ENCODE measurements at regions of chr9 and their contacts with region 1.

Region 1: DNA sequence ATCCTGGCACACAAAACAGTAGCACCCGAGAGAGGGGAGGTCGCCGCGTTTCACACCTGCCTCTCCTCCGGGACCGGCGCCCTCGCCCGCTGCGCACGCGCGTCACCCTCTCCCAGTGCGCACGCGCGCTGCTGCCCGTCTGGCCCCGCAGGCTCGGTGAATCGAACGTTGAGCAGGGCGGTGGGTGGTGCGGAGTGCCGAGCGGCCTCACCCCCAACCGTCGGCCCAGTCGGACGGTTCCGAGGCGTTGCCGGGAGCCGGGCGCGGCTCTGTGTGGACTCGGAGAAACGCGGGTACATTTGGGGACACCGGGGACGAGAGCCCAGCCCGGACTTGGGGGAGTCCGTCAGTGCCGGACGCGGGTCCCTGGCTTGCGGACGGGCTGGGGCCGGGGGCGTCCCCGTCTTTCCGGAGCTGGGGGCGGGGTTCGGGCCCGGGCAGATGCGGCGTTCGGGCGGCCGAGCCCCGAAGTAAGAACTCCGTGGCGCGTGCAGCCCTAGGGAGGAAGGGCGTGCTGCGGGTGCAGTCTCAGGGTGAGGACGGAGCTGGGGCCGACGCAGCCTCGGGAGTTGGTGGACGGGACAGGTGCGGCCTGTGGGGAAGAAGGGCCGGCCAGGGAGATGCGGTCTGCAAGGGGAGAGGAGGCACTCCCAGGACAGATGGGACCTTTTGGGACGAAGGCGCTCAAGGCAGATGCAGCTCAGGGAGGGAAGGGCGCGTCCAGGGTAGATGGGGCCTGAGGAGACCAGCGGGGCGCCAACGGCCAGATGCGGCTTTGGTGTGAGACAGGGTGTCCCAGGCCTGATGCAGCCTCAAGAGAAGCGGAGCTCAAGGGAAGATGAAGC is at the start of gene POMT1:
- DNase-seq: peak; percentile 87
- H3K4me3 Mint-ChIP-seq: peak within 1 kb of the TSS; percentile 97
- H3K27ac Mint-ChIP-seq: peak within 1 kb of the TSS; percentile 91
- H3K4me1 Mint-ChIP-seq: peaks cover 35% of the 10 kb centered on the region
- H3K27me3 Mint-ChIP-seq: no peaks in the 10 kb centered on the region
- total RNA-seq, gene POMT1: 44.5 and 46.9 TPM in 2 replicates

Region 2: DNA sequence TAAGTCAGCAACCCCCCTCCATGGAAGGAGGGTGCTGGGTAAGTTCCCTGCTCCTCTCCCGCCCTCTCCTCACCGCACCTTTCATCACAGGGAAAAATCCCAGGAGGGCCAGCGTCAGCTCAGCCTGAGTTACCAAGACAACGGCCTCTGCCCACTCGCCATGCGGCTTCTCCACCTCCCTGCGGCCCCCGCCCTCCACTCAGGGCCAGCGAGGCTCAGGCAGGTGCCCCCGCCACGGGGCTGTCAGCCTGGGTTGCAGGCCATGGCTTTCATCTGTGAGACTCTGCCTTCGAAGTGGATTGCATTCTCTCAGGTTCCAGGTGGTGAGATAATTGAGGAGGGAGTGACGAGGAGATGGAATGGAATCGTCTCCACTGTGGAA is 521.3 kb before region 1 on chr9:
- intact Hi-C with region 1: no loop called
- DNase-seq: no peak
- H3K4me3 Mint-ChIP-seq: no peak overlapping the region
- H3K27ac Mint-ChIP-seq: no peak overlapping the region
- H3K4me1 Mint-ChIP-seq: no peaks in the 10 kb centered on the region
- H3K27me3 Mint-ChIP-seq: no peaks in the 10 kb centered on the region

Region 3: DNA sequence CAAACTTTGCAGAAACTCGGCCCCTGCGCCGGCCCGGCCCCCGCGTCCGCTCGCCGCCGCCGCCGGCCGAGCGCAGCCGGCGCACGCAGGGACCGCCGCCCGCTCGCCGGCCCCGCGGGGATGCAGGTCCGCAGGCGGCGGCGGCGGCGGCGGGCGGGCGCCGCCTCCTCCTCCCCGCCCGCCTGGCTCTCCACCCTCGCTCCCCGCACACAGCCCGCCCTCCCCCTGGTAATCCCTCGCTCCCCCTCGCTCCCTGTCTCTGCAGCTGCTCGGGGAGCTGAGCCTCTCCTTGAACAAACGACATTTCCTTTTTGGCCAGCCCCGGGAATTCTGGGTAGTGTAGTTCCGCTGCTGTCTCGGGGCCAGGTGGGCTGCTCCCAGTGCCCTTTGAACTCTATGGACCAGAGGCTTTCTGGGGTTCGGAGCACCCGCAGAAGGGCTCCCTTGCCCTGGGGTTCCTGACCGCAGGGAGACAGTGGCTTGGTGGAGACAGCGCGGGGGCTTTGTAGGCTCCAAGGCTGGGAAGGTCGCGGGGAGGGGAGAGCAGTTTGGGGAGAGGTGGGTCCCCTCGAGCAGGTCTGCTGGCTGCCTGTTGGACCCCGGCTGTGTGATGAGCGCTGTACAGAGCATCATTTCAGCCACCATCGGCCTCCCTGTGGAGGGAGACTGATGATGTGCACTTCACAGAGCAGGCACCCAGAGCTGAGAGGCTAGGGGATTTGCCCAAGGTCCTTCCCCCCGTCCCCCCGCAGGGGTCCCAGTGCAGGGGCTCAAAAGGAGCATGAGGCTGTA is 224.9 kb before region 1 on chr9:
- intact Hi-C with region 1: loop called (anchors 5 kb)
- DNase-seq: peak; percentile 67
- H3K4me3 Mint-ChIP-seq: peak overlapping the region; percentile 85
- H3K27ac Mint-ChIP-seq: peak overlapping the region; percentile 91
- H3K4me1 Mint-ChIP-seq: peaks cover 19% of the 10 kb centered on the region
- H3K27me3 Mint-ChIP-seq: peaks cover 14% of the 10 kb centered on the region

Region 4: DNA sequence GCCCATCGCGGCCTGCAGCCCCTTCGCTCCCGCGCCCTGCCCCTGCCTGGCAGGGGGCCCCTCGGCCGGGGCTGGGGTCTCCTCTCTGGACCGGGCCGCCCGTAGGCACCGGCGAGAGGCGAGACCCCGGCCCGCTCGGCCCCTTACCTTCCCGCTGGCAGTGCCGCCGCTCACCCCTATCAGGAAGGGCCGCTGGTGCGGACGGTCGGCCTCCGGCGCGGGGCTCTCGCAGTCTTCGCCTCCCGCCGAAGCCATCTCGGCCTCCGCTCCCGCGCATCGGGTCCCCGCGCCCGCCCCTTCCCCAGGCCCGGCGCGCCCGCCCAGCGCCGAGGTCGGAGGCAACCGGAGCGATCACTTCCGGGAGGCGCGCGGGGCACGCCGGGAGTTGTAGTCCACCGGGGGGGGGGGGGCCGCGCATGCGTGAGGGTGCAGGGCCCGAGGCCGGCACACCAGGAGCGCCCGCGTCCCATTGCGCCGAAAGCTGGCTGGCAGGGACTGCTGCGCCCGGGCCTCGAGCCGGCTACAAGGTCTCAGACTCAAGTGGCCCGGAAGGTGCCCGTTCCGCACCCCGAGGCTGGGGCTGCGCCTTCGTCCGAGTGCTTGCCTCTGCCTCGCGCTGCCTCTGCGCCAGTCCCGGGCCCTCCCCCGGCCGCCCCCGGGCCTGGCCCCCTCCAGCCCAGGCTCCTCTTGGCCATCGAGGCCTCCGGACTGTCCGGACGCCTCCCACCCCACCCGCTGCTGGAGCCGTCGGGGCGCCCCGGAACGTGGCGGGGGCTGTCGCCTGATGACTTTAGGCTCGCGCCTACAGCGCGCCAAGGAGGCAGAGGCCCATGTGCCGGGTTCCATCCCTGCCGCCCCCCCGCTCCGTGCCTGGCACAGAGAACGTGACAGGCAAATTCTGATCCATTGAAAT is 28.2 kb after region 1 on chr9 and contains the start of gene UCK1:
- intact Hi-C with region 1: loop called (anchors 2 kb)
- DNase-seq: peak; percentile 72
- H3K4me3 Mint-ChIP-seq: peak within 1 kb of the TSS; percentile 79
- H3K27ac Mint-ChIP-seq: peak within 1 kb of the TSS; percentile 42
- H3K4me1 Mint-ChIP-seq: peaks cover 13% of the 10 kb centered on the region
- H3K27me3 Mint-ChIP-seq: no peaks in the 10 kb centered on the region
- total RNA-seq, gene UCK1: 22.4 and 24.9 TPM in 2 replicates

Region 5: DNA sequence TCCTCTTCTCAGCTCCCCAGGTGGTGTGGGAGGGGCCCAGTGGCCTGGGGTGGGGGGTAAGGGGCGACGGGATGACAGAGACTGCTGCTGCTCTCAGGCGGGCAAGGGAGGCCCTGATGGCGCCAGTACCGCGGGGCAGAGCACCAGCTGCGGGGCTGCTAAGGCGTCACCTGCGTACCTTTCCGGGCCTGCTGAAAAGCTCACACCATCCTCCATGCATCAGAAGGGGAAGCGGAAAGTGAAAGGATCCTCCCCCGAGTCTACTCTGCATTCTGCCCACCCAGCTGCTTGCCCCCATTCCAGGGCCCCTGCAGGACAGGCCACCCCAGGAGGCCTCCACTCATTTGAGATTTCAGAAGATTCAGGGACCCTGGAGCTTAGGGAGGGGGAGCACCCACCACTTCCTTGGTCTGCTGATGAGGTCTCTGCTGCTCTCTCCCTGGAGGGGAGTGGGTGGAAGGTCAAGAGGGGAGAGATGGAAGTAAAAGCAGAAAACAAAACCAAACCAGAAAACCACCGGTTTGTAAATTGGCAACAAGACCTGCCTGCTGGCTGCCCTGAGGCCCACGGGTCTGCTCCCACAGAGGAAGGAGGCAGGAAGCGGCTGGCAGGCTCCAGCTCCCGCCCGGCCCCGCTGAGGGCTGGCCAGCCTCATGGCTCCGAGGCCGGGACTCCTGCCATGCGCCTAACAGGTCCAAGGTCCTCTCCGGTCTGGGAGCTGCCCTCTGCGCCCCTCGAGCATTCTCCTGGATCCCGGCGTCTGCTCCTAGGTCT is 75.9 kb after region 1 on chr9:
- intact Hi-C with region 1: loop called (anchors 5 kb)
- DNase-seq: peak; percentile 28
- H3K4me3 Mint-ChIP-seq: peak overlapping the region; percentile 26
- H3K27ac Mint-ChIP-seq: peak overlapping the region; percentile 86
- H3K4me1 Mint-ChIP-seq: peaks cover 14% of the 10 kb centered on the region
- H3K27me3 Mint-ChIP-seq: no peaks in the 10 kb centered on the region

Region 6: GRCh38 chr9:131668439-131669268 is 165.7 kb after region 1 on chr9:
- intact Hi-C with region 1: loop called (anchors 10 kb)
- DNase-seq: peak; percentile 68
- H3K4me3 Mint-ChIP-seq: peak overlapping the region; percentile 72
- H3K27ac Mint-ChIP-seq: peak overlapping the region; percentile 100
- H3K4me1 Mint-ChIP-seq: peaks cover 79% of the 10 kb centered on the region
- H3K27me3 Mint-ChIP-seq: no peaks in the 10 kb centered on the region

Region 7: DNA sequence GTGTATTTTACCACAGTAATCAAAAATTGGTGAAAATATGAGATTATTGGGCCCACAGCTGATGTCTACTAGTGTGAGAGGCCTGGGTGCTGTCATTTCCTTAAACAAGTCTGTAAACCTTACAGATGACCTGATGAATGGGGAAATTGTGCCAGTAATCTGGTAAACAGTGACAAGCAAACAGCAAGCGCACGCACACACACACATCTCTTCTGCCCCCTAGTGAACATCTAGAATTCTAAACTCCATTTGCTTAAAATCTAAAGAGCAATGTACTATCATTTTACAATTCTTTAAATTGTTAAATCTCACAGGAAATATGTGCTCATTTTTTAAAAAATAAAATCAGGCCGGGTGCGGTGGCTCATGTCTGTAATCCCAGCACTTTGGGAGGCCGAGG is 244.4 kb after region 1 on chr9:
- intact Hi-C with region 1: loop called (anchors 5 kb)
- DNase-seq: no peak
- H3K4me3 Mint-ChIP-seq: no peak overlapping the region
- H3K27ac Mint-ChIP-seq: no peak overlapping the region
- H3K4me1 Mint-ChIP-seq: peaks cover 34% of the 10 kb centered on the region
- H3K27me3 Mint-ChIP-seq: peaks cover under 1% of the 10 kb centered on the region